ENCODE measurements at regions of chr4 and their contacts with region 1.

Region 1: GRCh38 chr4:112099701-112100297 is 45.5 kb upstream of the FAM241A start:
- DNase-seq: peak; percentile 57
- ATAC-seq: peak; percentile 95
- H3K4me3 ChIP-seq: no peak overlapping the region
- H3K27ac ChIP-seq: no peak overlapping the region
- H3K4me1 ChIP-seq: peaks cover 5% of the 10 kb centered on the region
- H3K27me3 ChIP-seq: no peaks in the 10 kb centered on the region
- CTCF ChIP-seq: peak; percentile 71
- EP300 ChIP-seq: no peak
- POLR2A ChIP-seq: no peak
- RAD21 ChIP-seq: peak; percentile 67

Region 2: GRCh38 chr4:112196461-112196860 is 96.7 kb after region 1 on chr4:
- CTCF ChIA-PET with region 1: no interaction called
- POLR2A ChIA-PET with region 1: no interaction called
- in situ Hi-C with region 1: no loop called
- intact Hi-C with region 1: no loop called
- DNase-seq: no peak
- ATAC-seq: no peak
- H3K4me3 ChIP-seq: no peak overlapping the region
- H3K27ac ChIP-seq: no peak overlapping the region
- H3K4me1 ChIP-seq: no peaks in the 10 kb centered on the region
- H3K27me3 ChIP-seq: no peaks in the 10 kb centered on the region
- CTCF ChIP-seq: no peak
- EP300 ChIP-seq: no peak
- POLR2A ChIP-seq: no peak
- RAD21 ChIP-seq: no peak

Region 3: GRCh38 chr4:112214390-112215264 is 114.8 kb after region 1 on chr4:
- CTCF ChIA-PET with region 1: interaction called, 6 read pairs
- POLR2A ChIA-PET with region 1: no interaction called
- in situ Hi-C with region 1: no loop called
- intact Hi-C with region 1: loop called (anchors 1 kb)
- DNase-seq: peak; percentile 51
- ATAC-seq: 0 out of 3 replicates have a peak, but pooled peaks have one; percentile 35
- H3K4me3 ChIP-seq: no peak overlapping the region
- H3K27ac ChIP-seq: no peak overlapping the region
- H3K4me1 ChIP-seq: peaks cover 27% of the 10 kb centered on the region
- H3K27me3 ChIP-seq: no peaks in the 10 kb centered on the region
- CTCF ChIP-seq: peak; percentile 50
- EP300 ChIP-seq: no peak
- POLR2A ChIP-seq: no peak
- RAD21 ChIP-seq: peak; percentile 44; the same call in 1 of the 2 replicates

Region 4: DNA sequence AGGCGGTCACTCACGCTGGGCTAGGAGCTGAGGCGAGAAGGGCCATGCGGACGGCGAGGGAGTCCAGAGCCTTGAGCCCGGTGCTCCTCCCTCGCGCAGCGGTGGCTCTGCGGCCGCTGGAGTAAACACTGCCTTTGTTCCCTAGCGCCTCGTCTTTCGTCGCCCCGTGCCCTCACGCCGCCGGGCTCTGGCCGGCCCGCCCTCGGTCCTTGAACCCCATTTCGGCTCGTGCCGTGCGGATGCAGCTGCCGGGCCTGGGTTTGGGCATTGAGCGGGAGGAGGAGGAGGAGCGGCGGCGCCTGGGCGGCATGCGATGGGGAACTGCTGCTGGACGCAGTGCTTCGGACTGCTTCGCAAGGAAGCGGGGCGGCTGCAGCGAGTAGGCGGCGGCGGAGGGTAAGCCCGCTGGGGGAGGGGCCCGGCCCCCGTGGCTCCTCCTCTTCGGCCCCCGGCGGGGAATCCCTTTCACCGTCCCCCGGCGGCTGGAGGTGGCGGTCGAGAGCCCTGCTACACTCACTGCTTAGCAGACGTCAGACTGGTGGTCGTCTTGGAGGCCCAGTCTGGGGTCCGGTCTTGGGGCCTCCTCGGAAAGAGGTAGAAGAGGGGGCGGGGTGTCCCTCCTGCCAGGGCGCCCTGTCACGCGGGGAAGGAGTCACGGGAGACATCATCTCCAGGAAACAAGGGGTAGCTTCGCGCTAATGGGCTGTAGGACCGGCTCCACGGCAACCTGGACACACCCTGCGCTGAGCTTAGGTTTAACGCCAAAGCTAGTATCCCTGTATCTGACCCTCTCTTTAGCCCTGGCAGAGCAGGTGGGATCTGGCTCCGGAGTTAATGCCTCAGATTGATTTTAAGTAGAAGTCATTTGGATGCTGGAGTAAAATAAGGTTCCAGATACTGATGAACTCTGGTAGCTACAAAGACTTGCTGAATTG is 132.2 kb after region 1 on chr4 and contains the start of gene AP1AR:
- CTCF ChIA-PET with region 1: interaction called, 36 read pairs
- POLR2A ChIA-PET with region 1: interaction called, 4 read pairs
- in situ Hi-C with region 1: loop called (anchors 5 kb)
- intact Hi-C with region 1: loop called (anchors 1 kb)
- DNase-seq: peak; percentile 73
- ATAC-seq: peak; percentile 95
- H3K4me3 ChIP-seq: peak within 1 kb of the TSS; percentile 86 to 99 (median 96)
- H3K27ac ChIP-seq: peak within 1 kb of the TSS; percentile 100
- H3K4me1 ChIP-seq: peaks cover 47% of the 10 kb centered on the region
- H3K27me3 ChIP-seq: no peaks in the 10 kb centered on the region; a peak in 1 of 5 replicates
- CTCF ChIP-seq: peak; percentile 69
- EP300 ChIP-seq: no peak
- POLR2A ChIP-seq: peak; percentile 97 to 99
- RAD21 ChIP-seq: peak; percentile 54
- total RNA-seq, gene AP1AR: 39.9 and 43.5 TPM in 2 replicates

Region 5: DNA sequence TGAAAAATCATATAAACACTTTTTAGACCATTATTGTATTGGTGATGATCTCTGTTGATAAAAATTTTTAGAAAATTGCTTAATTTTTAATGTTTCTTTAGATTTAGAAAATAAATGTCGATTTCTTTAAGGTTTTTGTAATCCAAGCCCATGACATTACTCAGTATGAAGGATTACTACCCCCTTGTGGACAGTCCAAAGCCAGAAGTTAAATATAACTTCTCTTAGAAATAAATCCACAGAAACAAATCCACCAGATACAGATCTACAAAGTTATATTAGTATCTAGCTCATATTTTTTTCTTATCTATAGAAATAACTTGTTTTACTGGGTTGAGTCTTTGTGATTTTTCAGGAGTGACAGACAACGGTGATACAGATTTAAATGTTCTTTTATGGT is 167.0 kb after region 1 on chr4:
- CTCF ChIA-PET with region 1: interaction called, 16 read pairs
- POLR2A ChIA-PET with region 1: no interaction called
- in situ Hi-C with region 1: no loop called
- intact Hi-C with region 1: loop called (anchors 1 kb)
- DNase-seq: no peak
- ATAC-seq: peak; percentile 52
- H3K4me3 ChIP-seq: no peak overlapping the region
- H3K27ac ChIP-seq: no peak overlapping the region
- H3K4me1 ChIP-seq: no peaks in the 10 kb centered on the region
- H3K27me3 ChIP-seq: no peaks in the 10 kb centered on the region
- CTCF ChIP-seq: no peak
- EP300 ChIP-seq: no peak
- POLR2A ChIP-seq: no peak
- RAD21 ChIP-seq: no peak

Region 6: GRCh38 chr4:112321776-112322684 is 222.2 kb after region 1 on chr4:
- CTCF ChIA-PET with region 1: interaction called, 5 read pairs
- POLR2A ChIA-PET with region 1: no interaction called
- in situ Hi-C with region 1: no loop called
- intact Hi-C with region 1: loop called (anchors 2 kb)
- DNase-seq: peak; percentile 38
- ATAC-seq: peak; percentile 55; the same call in 2 of the 3 replicates
- H3K4me3 ChIP-seq: no peak overlapping the region
- H3K27ac ChIP-seq: no peak overlapping the region
- H3K4me1 ChIP-seq: no peaks in the 10 kb centered on the region
- H3K27me3 ChIP-seq: no peaks in the 10 kb centered on the region
- CTCF ChIP-seq: peak; percentile 79
- EP300 ChIP-seq: no peak
- POLR2A ChIP-seq: no peak
- RAD21 ChIP-seq: no peak

Region 7: DNA sequence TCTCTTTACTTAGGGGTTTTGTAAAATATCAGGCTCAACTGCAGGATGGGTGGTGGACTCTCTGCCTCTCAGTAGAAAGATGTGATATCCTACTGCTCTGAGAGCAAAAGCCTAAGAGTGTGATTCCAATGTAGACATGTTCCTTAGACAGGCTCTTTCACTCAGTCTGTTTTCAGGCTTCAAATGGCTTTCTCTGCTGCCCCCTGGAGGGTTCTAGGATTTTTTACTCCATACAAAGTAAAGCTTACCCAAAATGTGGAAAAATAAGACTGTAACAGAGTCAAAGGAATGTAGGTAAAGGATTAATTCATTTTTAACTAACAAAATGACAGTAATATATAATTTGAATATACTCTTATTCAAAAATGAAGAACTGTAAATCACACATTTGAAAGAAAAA is 504.8 kb after region 1 on chr4:
- CTCF ChIA-PET with region 1: no interaction called
- POLR2A ChIA-PET with region 1: no interaction called
- in situ Hi-C with region 1: no loop called
- intact Hi-C with region 1: loop called (anchors 10 kb)
- DNase-seq: peak; percentile 39
- ATAC-seq: peak; percentile 88
- H3K4me3 ChIP-seq: no peak overlapping the region
- H3K27ac ChIP-seq: no peak overlapping the region
- H3K4me1 ChIP-seq: no peaks in the 10 kb centered on the region
- H3K27me3 ChIP-seq: no peaks in the 10 kb centered on the region
- CTCF ChIP-seq: peak; percentile 60
- EP300 ChIP-seq: no peak
- POLR2A ChIP-seq: no peak
- RAD21 ChIP-seq: no peak; the same call in 1 of the 2 replicates